ENCODE measurements at regions of chr20 and their contacts with region 1.

Region 1: GRCh38 chr20:54062812-54063280 is 7.5 kb downstream of the BCAS1 start:
- DNase-seq: no peak
- ATAC-seq: peak; percentile 36 to 39
- H3K4me3 ChIP-seq: no peak overlapping the region
- H3K27ac ChIP-seq: no peak overlapping the region
- H3K4me1 ChIP-seq: no peaks in the 10 kb centered on the region
- H3K27me3 ChIP-seq: no peaks in the 10 kb centered on the region
- CTCF ChIP-seq: peak in 3 of 5 experiments; percentile 25 to 41 (median 25)
- POLR2A ChIP-seq: no peak

Region 2: GRCh38 chr20:53570521-53571357 is 492.1 kb before region 1 on chr20:
- in situ Hi-C with region 1: loop called in 1 of 4 experiments (anchors 25 kb)
- intact Hi-C with region 1: loop called (anchors 10 kb)
- DNase-seq: no peak
- ATAC-seq: no peak
- H3K4me3 ChIP-seq: no peak overlapping the region
- H3K27ac ChIP-seq: no peak overlapping the region
- H3K4me1 ChIP-seq: no peaks in the 10 kb centered on the region
- H3K27me3 ChIP-seq: no peaks in the 10 kb centered on the region
- CTCF ChIP-seq: no peak
- POLR2A ChIP-seq: no peak

Region 3: GRCh38 chr20:53857723-53858236 is 205.1 kb before region 1 on chr20:
- in situ Hi-C with region 1: no loop called
- intact Hi-C with region 1: no loop called
- DNase-seq: no peak
- ATAC-seq: no peak
- H3K4me3 ChIP-seq: no peak overlapping the region
- H3K27ac ChIP-seq: no peak overlapping the region
- H3K4me1 ChIP-seq: no peaks in the 10 kb centered on the region
- H3K27me3 ChIP-seq: no peaks in the 10 kb centered on the region
- CTCF ChIP-seq: no peak
- POLR2A ChIP-seq: no peak

Region 4: GRCh38 chr20:53939572-53940359 is 123.1 kb before region 1 on chr20:
- in situ Hi-C with region 1: loop called in 1 of 4 experiments (anchors 10 kb)
- intact Hi-C with region 1: no loop called
- DNase-seq: peak; percentile 73 to 89
- ATAC-seq: peak; percentile 93
- H3K4me3 ChIP-seq: peak overlapping the region in 3 of 4 donors; percentile 8 to 20 (median 11)
- H3K27ac ChIP-seq: peak overlapping the region; percentile 35 to 73 (median 66)
- H3K4me1 ChIP-seq: peaks cover 23 to 24% of the 10 kb centered on the region in 2 donors
- H3K27me3 ChIP-seq: no peaks in the 10 kb centered on the region
- CTCF ChIP-seq: peak; percentile 48 to 72 (median 70)
- POLR2A ChIP-seq: no peak

Measured in gastrocnemius medialis (tissue), 4 donors.